ENCODE measurements at regions of chr1 and their contacts with region 1.

Region 1: DNA sequence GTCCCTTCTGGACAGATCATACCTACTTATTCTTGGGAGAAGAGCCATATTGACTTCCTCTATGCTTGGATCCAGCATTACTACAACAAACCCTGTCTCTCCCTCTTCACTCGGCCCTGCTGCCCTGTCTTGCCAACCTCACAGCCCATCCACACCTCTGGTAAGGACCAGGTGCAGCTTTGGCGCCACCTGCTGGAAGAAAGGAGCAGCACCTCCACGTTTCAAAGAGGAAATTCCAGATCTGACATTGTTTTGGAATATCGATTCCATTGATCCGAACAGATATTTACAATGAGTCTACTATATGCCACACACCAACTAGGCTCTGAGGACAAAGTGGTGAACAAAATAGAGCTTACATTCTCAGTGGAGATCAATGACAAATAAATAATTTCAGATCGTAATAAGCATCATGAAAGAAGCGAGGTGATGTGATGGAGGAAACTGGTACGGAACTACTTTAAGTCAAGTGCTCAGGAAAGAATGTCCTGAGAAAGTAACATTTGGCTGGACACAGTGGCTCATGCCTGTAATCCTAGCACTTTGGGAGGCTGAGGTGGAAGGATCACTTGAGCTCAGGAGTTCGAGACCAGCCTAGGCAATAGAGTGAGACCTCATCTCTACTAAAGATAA is 18.7 kb downstream of the MFSD2A start:
- DNase-seq: peak; percentile 72 to 86
- ATAC-seq: peak; percentile 77 to 87 (median 80)
- H3K4me3 ChIP-seq: no peak overlapping the region
- H3K27ac ChIP-seq: no peak overlapping the region
- H3K4me1 ChIP-seq: no peaks in the 10 kb centered on the region
- H3K27me3 ChIP-seq: no peaks in the 10 kb centered on the region
- CTCF ChIP-seq: peak; percentile 98

Region 2: DNA sequence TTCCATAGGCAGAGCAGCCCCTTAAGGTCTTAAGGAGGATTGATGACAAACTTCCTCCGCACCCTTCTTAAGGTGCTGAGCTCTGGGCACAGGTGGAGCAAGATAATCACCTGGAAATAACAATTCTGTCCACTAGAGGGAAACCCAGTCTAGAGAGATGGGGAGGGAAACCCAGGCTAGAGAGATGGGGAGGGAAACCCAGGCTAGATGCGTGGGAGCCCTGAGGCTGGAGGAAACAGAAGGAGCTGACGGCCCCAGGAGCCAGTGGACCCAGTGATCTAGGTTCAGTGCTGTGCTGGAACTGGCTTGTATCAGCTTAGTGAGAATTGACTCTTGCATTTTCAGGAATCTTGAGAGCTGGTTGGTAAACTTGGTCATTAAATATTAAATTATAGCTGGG is 54.1 kb before region 1 on chr1:
- intact Hi-C with region 1: loop called (anchors 2 to 5 kb)
- DNase-seq: no peak
- ATAC-seq: peak; percentile 71 to 86 (median 80)
- H3K4me3 ChIP-seq: no peak overlapping the region
- H3K27ac ChIP-seq: no peak overlapping the region
- H3K4me1 ChIP-seq: no peaks in the 10 kb centered on the region
- H3K27me3 ChIP-seq: peaks cover 0 to 12% (median 5%) of the 10 kb centered on the region in 3 donors
- CTCF ChIP-seq: peak; percentile 49

Region 3: DNA sequence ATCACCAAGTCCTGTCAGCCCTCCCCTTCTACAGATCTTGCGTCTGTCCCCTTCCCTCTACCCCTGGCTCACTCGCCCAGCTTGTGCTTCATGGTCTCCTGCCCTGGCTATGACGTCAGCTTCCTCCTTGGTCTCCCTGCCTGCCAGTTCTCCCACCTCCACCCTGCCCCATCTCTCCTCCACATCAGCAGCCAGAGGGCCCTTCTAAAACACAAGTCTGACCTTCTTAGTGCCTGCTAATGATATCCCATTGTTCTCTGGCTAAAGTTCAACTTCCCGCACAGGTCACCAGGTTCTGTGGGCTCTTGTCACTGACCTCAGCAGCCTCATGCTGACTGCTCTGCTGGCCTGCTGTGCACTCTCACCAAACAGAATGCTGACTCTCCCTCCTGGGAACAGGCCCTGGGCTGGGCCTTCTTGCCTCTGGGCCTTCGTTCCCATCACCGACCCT is 47.3 kb before region 1 on chr1:
- intact Hi-C with region 1: loop called in 1 of 2 experiments (anchors 5 kb)
- DNase-seq: no peak
- ATAC-seq: no peak
- H3K4me3 ChIP-seq: no peak overlapping the region
- H3K27ac ChIP-seq: no peak overlapping the region
- H3K4me1 ChIP-seq: no peaks in the 10 kb centered on the region
- H3K27me3 ChIP-seq: peaks cover 0 to 12% (median 3%) of the 10 kb centered on the region in 3 donors
- CTCF ChIP-seq: no peak

Region 4: DNA sequence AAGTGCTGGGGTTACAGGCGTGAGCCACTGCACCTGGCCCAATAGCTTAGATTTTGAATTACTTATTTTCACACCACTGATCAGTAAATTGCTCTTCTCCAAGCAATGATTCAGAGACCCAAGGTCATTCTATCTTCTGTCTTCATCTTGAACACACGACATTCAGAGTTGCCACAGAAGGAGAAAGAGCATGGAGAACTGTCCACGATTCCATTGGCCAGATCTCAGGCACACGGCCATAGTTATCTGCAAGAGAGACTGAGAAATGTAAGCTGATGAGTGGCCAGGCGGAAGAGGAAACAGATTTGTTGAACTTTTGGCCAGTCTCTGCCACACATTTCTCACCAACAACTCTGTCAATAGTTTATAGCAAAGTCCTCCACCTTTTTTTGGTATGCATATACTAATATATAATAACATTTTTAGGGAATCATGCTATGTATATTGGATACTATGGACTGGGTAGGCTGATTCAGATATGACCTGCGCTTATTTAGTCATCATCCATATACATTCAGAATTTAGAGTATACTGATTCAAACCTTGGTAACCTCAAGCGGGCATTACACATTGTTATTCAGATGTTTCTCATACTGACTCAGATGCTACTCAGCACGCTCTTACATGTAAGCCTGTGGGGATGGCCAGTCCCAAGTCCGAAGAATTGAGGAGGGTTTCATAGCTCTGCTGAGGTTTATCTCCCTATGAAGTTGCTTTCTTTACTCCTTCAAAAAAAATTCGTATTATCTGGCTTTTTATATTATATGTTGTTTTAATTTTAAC is 41.4 kb after region 1 on chr1:
- intact Hi-C with region 1: no loop called
- DNase-seq: no peak
- ATAC-seq: no peak
- H3K4me3 ChIP-seq: no peak overlapping the region
- H3K27ac ChIP-seq: no peak overlapping the region
- H3K4me1 ChIP-seq: no peaks in the 10 kb centered on the region
- H3K27me3 ChIP-seq: no peaks in the 10 kb centered on the region
- CTCF ChIP-seq: no peak

Measured in psoas muscle (tissue), 8 donors.